ENCODE measurements at regions of chr4 and their contacts with region 1.

Region 1: GRCh38 chr4:70405765-70406164 is 8.0 kb downstream of the OPRPN start:
- DNase-seq: no peak
- ATAC-seq: peak; percentile 71
- H3K4me3 ChIP-seq: no peak overlapping the region
- H3K27ac ChIP-seq: no peak overlapping the region
- H3K4me1 ChIP-seq: no peaks in the 10 kb centered on the region
- H3K27me3 ChIP-seq: no peaks in the 10 kb centered on the region
- CTCF ChIP-seq: no peak
- EP300 ChIP-seq: peak; percentile 84 to 90; a peak in 3 of 4 replicates
- POLR2A ChIP-seq: no peak
- RAD21 ChIP-seq: no peak

Region 2: GRCh38 chr4:70315928-70316327 is 89.8 kb before region 1 on chr4:
- CTCF ChIA-PET with region 1: no interaction called
- POLR2A ChIA-PET with region 1: no interaction called
- RAD21 ChIA-PET with region 1: no interaction called
- SMC1A ChIA-PET with region 1: no interaction called
- in situ Hi-C with region 1: no loop called
- intact Hi-C with region 1: loop called (anchors 5 kb)
- DNase-seq: no peak
- ATAC-seq: peak; percentile 84
- H3K4me3 ChIP-seq: no peak overlapping the region
- H3K27ac ChIP-seq: no peak overlapping the region
- H3K4me1 ChIP-seq: no peaks in the 10 kb centered on the region
- H3K27me3 ChIP-seq: no peaks in the 10 kb centered on the region
- CTCF ChIP-seq: peak; percentile 26 to 49 (median 28); a peak in 3 of 6 replicates
- EP300 ChIP-seq: no peak
- POLR2A ChIP-seq: no peak
- RAD21 ChIP-seq: peak; percentile 42

Measured in GM12878 (cell line).